ENCODE measurements at regions of chr16 and their contacts with region 1.

Region 1: DNA sequence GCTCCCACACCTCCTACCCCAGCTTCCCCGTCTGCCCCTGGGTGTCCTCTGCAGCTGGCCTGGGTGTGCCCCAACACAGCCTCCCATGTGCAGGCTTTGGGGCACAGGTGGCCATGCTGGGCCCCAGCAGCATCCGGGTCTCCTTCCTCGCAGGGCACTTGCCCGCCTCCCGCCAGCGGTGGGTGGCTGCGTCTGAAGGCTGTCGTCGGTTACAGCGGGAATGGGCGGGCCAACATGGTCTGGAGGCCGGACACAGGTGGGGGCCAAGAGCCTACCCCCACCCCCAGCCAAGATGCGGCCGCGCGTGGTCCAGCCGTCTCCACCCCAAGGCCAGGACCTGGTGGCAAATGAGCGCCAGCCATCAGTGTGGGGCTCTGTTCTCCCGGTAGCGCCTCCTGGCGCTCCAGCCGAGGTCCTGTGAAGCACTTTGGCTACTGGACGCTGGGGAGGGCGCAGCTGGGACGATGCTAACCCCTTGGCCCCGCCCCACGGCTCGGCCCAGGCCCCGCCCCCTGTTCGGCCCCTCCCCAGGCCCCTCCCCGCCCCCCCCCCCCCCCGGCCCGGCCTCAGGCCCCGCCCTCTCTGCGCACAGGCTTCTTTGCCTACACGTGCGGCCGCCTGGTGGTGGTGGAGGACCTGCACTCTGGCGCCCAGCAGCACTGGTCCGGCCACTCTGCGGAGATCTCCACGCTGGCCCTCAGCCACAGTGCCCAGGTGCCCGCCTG is 7.3 kb upstream of the RHOT2 start:
- DNase-seq: peak; percentile 53
- ATAC-seq: peak; percentile 94
- H3K4me3 ChIP-seq: no peak overlapping the region
- H3K27ac ChIP-seq: peak overlapping the region; percentile 67; the same call in 1 of the 2 replicates
- H3K4me1 ChIP-seq: peaks cover 3 to 9% of the 10 kb centered on the region in 2 experiments; a peak in 2 of 4 replicates
- H3K27me3 ChIP-seq: no peaks in the 10 kb centered on the region
- CTCF ChIP-seq: peak; percentile 26 to 44 (median 42); a peak in 5 of 6 replicates
- POLR2A ChIP-seq: no peak
- RAD21 ChIP-seq: peak; percentile 33

Region 2: DNA sequence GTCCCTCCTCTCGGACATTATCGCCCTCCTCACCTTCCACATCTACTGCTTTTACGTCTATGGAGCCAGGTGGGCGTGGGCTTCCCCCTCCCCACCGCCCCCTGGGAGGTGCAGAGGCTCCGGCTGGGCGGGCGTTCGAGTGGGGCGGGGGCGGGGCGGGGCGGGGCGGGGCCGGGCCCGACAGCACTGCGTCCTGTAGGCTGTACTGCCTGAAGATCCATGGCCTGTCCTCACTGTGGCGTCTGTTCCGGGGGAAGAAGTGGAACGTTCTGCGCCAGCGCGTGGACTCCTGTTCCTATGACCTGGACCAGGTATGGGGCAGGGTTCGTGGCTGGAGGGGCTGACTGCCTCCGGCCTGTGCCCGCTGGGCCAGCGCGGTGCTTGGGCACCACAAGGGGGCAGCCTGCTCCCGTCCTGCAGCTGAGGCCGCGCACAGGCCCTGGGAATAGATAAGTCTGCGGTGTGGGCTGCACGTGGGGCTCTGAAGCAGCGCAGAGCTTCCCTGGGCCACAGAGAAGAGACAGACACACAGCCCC is 81.7 kb before region 1 on chr16:
- CTCF ChIA-PET with region 1: interaction called, 3 read pairs
- POLR2A ChIA-PET with region 1: no interaction called
- RAD21 ChIA-PET with region 1: no interaction called
- intact Hi-C with region 1: loop called (anchors 2 kb)
- DNase-seq: no peak
- ATAC-seq: peak; percentile 92
- H3K4me3 ChIP-seq: no peak overlapping the region
- H3K27ac ChIP-seq: no peak overlapping the region
- H3K4me1 ChIP-seq: no peaks in the 10 kb centered on the region
- H3K27me3 ChIP-seq: no peaks in the 10 kb centered on the region
- CTCF ChIP-seq: peak; percentile 59 to 74 (median 68); a peak in 5 of 6 replicates
- POLR2A ChIP-seq: no peak
- RAD21 ChIP-seq: peak; percentile 81

Region 3: DNA sequence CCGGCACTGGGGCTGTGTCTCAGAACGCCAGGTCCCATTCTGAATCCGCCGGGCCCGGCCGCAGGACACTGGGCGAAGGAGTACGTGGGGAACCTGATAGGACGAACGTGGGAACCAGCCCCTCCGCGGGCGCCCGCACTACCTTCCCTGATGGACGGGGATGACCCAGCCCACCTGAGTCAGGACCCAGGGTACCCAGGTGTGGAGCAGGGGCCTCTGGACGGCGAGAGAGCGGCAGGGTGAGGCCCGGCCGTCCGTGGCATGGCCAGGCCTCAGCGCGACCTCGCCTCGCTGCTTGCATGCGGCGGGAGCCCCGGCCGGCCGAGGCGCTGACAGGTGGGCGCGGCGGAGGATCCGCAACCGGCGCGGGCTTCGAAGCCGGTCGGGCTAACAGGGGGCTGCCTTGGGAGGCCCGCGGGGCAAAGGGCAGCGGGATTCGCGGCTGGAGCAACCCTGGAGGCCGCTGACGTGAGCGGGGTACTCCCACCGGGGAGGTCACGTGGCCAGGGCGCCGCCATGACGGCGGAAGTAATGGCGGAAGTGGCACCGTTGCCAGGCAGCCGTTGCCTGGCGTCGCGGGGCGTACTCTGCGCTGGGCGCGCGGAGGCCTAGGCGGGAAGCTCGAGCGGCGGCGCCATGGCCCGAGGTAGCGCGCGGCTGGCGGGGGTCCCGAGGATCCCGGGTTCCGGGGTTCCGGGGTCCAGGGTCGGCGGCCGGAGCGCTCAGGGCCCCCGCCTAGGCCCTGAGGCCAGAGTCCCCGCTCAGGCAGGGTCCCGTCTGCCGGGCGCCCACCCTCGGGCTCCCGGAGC is 11.6 kb before region 1 on chr16 and contains the start of gene WDR90:
- CTCF ChIA-PET with region 1: interaction called, 13 read pairs
- POLR2A ChIA-PET with region 1: interaction called, 4 read pairs
- RAD21 ChIA-PET with region 1: no interaction called
- intact Hi-C with region 1: no loop called
- DNase-seq: peak; percentile 59
- ATAC-seq: peak; percentile 66
- H3K4me3 ChIP-seq: peak within 1 kb of the TSS; percentile 64 to 68
- H3K27ac ChIP-seq: peak within 1 kb of the TSS; percentile 96
- H3K4me1 ChIP-seq: peaks cover 19 to 40% of the 10 kb centered on the region in 2 experiments
- H3K27me3 ChIP-seq: no peaks in the 10 kb centered on the region
- CTCF ChIP-seq: no peak
- POLR2A ChIP-seq: peak; percentile 44
- RAD21 ChIP-seq: no peak
- total RNA-seq, gene WDR90: 73.7 TPM

Region 4: DNA sequence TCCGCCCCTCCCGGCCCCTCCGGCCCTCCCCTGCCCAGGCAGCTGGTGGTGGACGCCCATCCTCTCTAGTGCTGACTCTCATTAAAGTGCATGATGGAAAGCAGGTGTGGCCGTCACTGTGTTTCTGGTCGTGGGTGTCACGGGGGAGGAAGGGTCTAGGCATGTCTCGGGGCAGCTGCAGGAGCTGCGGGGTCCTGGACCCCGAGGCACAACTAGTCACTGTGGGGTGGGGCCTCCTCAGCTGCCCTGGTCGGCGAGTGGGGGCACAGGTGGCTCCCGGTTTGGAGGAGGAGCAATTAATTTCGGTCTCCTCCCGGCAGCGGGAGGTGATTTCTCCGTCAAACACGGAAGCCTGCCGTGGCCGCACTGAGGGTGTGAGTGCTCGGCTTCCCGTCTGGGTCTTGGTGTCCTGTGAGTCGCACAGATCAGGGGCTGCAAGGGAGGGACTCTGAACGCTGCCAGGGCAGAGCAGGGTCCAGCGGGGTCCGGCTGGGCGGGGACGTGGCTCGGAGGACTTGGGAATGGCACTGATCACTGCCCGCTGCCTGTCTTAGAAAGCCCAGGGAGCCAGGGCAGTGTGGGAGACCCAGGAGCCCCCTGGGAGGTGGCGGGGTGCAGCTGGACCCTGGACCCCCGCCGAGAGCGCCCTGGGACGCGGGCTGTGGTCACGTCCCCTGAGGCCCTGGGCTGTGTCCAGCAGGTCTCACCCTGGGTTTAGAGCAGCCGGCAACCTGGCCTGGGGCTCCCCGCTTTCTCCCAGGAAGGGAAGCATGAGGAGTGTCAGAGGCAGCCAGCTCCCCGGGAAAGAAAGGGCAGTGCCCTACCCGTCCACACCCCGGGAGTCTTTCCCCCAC is 598.5 kb after region 1 on chr16:
- CTCF ChIA-PET with region 1: no interaction called
- POLR2A ChIA-PET with region 1: no interaction called
- RAD21 ChIA-PET with region 1: no interaction called
- intact Hi-C with region 1: no loop called
- DNase-seq: no peak
- ATAC-seq: no peak
- H3K4me3 ChIP-seq: peak overlapping the region in 1 of 2 experiments; percentile 32; a peak in 1 of 4 replicates
- H3K27ac ChIP-seq: no peak overlapping the region
- H3K4me1 ChIP-seq: peaks cover 4 to 13% of the 10 kb centered on the region in 2 experiments; a peak in 3 of 4 replicates
- H3K27me3 ChIP-seq: peaks cover 4% of the 10 kb centered on the region; the same call in 1 of the 2 replicates
- CTCF ChIP-seq: no peak
- POLR2A ChIP-seq: no peak
- RAD21 ChIP-seq: no peak